Mammary epithelial cell (primary cell): ENCODE measurements at regions of chr7 and their contacts with region 1.

Region 1: DNA sequence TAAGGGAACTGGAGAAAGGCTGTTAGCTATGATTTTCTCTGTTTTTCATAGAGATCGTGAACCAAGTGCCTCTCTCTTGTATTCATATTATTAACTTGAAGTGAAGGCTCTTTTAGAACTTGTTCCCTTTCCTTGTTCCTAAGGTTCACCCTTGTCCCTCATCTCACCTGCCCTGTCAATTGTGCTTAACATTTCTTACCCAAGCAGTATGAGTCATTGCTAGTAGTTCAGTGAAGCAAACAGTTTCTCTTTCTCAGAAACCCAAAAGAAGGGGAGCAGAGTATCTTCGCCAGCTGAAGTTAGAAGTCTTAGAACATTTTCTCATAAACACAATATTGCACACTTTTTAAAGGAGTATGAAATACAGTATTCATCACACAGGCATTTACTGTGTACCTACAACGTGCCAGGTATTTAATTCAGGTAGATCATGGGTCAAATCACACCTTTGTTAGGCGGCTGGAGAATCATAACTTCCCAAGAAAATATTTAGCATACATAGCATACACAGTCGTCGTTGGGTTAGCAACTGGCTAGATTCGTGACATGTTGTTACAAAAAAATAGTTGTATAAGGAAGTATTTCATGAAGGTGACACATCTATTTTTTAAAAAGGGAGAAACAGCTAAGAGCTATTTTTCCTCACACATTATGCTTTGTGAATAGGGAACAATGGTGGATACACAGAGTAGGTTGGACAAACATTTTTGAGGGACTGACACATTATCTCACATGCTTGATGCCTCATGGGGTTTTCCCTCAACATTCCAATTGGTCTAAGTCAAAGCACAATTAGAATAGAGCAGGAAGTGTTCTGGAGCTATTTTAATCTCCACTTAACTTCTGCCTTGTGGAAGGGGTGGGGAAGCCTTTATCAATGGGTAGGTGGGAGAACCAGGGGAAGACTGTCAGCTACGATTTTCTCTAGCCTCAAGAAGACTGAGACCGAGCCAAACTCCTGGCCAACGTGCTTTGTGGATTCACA is 13.2 kb downstream of the HDAC9 start:
- DNase-seq: peak; percentile 98
- H3K4me3 ChIP-seq: peak overlapping the region; percentile 69 to 81 (median 74)
- H3K27ac ChIP-seq: peak overlapping the region; percentile 100
- H3K4me1 ChIP-seq: peaks cover 13% of the 10 kb centered on the region
- H3K27me3 ChIP-seq: no peaks in the 10 kb centered on the region
- CTCF ChIP-seq: no peak

Region 2: GRCh38 chr7:18357691-18358090 is 151.0 kb before region 1 on chr7:
- CTCF ChIA-PET with region 1: no interaction called
- dilution Hi-C with region 1: no loop called
- in situ Hi-C with region 1: loop called in 1 of 2 experiments (anchors 25 kb)
- intact Hi-C with region 1: loop called (anchors 1 kb)
- DNase-seq: peak; percentile 48
- H3K4me3 ChIP-seq: no peak overlapping the region
- H3K27ac ChIP-seq: no peak overlapping the region
- H3K4me1 ChIP-seq: no peaks in the 10 kb centered on the region
- H3K27me3 ChIP-seq: no peaks in the 10 kb centered on the region
- CTCF ChIP-seq: peak; percentile 37 to 45

Region 3: DNA sequence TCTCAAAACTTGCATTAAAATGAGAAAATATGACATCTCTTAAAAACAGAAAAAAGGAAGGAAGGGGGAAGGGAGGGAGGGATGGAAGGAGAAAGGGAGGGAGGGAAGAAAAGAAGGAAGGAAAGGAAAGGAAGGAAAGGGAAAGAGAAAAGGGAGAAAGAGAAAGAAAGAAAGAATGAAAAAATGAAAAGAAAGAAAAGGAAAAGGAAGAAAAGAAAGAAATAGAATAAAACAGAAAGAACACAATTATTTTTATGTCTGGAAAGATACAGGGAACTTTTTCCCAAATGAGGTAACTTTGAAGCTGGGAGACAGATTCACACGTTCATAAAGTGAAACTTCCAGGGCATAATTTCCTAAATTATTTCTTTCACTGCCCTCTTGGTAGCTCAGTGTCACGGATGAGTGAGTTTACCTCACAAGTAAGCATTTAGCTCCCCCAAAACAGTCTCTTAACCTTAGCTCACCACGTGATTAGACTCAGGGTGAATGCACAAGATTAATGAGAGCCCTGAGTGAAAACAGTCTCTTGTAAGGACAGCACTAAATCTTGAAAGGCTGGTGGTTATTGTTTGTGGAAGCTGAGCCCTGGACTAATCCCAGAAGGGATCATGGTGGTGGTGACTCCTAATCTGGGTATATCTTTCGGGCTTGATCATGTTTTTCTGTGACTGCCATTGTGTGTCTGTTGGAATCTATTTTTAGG is 87.3 kb before region 1 on chr7:
- CTCF ChIA-PET with region 1: no interaction called
- dilution Hi-C with region 1: no loop called
- in situ Hi-C with region 1: no loop called
- intact Hi-C with region 1: loop called (anchors 2 kb)
- DNase-seq: no peak
- H3K4me3 ChIP-seq: peak overlapping the region in 1 of 3 experiments; percentile 20
- H3K27ac ChIP-seq: peak overlapping the region; percentile 66
- H3K4me1 ChIP-seq: peaks cover 15% of the 10 kb centered on the region
- H3K27me3 ChIP-seq: no peaks in the 10 kb centered on the region
- CTCF ChIP-seq: no peak

Region 4: DNA sequence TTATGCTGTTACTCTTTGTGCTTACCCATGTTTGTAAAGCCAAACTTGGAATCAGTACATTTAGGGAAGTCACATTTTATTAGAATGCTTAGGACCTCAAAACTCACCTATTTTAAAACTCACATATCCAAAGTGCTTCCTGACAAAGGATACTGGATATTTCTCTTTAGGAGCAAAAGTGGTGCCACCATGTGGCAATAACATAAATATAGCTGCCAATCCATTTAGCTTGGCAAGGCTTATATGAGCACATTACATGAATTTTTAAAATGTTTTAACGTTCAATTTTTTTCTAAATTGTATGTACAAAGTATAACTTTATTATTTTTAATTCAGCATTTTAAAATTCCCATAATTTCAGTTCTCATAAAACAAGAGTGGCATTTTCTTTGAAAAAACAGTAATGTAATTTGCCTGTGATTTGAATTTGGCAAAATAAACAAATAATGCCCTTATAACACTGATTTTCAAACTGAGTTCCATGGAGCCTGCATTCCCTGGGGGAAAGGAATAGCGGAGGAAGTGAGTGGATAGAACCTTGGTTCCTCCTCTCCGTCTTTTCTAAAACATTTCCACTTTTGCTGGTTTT is 62.2 kb after region 1 on chr7:
- CTCF ChIA-PET with region 1: interaction called, 5 read pairs
- dilution Hi-C with region 1: no loop called
- in situ Hi-C with region 1: no loop called
- intact Hi-C with region 1: loop called (anchors 1 kb)
- DNase-seq: peak; percentile 22
- H3K4me3 ChIP-seq: no peak overlapping the region
- H3K27ac ChIP-seq: no peak overlapping the region
- H3K4me1 ChIP-seq: peaks cover 7% of the 10 kb centered on the region
- H3K27me3 ChIP-seq: no peaks in the 10 kb centered on the region
- CTCF ChIP-seq: peak; percentile 41 to 45

Region 5: DNA sequence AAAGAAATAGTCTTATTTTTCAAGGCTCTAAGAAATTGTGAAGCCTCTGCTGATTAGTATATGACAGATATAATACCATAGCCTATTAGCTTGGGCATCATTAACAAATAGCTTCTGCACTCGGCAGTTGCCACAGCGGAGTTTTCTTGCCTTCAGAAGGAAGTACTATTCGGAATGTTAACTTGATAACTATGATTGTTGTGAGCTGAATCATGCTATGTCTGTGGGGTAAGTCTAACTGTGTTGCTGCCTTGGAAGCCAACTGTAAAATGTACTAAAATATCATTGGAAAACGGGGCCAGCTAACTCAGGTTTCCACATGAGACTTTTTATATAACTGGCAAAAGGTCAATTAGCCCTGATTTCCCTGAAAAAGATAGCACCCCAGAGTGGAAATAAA is 515.5 kb after region 1 on chr7:
- CTCF ChIA-PET with region 1: no interaction called
- dilution Hi-C with region 1: no loop called
- in situ Hi-C with region 1: no loop called
- intact Hi-C with region 1: loop called (anchors 2 kb)
- DNase-seq: peak; percentile 45
- H3K4me3 ChIP-seq: no peak overlapping the region
- H3K27ac ChIP-seq: no peak overlapping the region
- H3K4me1 ChIP-seq: peaks cover 38% of the 10 kb centered on the region
- H3K27me3 ChIP-seq: no peaks in the 10 kb centered on the region
- CTCF ChIP-seq: no peak